ENCODE measurements at regions of chr1 and their contacts with region 1.

Region 1: GRCh38 chr1:24897767-24898483 is 32.2 kb downstream of the RUNX3 start:
- DNase-seq: peak; percentile 29 to 53 (median 40)
- H3K4me3 ChIP-seq: no peak overlapping the region
- H3K27ac ChIP-seq: no peak overlapping the region
- H3K4me1 ChIP-seq: peaks cover 0 to 24% (median 17%) of the 10 kb centered on the region in 4 experiments
- H3K27me3 ChIP-seq: no peaks in the 10 kb centered on the region

Region 2: DNA sequence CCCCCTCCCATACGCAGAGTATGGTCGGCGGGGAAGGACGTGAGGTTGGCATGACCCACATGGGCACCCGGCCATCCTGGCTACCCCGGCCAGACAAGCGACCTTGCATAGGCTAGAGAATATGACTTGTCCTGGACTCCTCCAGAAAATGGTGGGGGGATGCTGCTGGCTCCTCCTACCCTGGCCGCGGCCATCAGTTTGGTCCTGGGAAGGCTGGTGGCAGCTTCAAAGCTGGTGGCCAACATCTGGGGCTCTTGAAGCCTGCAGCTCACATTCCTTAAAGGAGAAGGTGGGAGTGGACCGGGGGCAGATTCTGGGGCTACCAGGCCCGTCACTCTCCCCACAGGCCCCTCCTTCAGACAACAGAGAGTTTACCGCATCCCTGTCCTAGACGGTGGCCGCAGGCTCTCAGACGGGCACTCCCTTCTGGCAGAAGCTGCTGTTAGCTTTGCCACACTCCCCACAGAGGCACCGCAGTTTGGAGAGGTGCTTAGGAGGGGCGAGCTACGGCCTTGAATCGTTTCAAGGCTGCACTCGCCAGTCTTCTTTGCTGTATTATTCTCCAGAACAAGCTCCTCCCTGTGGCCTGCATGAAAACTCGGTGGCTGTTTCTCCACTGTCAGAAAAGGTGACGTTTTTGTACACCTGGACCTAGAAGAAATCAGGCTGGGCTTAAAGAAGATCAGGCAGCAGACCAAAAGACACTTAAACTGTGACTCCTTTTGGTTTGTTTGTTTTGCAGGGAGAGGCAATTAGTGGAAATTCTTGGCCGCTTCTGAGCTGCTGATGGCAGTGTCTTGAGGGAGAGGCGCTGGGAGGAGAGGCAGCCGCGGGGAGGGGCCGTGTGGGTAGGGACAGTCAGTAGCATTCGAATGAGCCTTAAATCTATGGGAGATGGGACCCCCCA is 35.9 kb before region 1 on chr1:
- CTCF ChIA-PET with region 1: interaction called, 22 read pairs
- POLR2A ChIA-PET with region 1: no interaction called
- DNase-seq: no peak
- H3K4me3 ChIP-seq: no peak overlapping the region
- H3K27ac ChIP-seq: no peak overlapping the region
- H3K4me1 ChIP-seq: peaks cover 2 to 40% (median 21%) of the 10 kb centered on the region in 4 experiments
- H3K27me3 ChIP-seq: no peaks in the 10 kb centered on the region

Region 3: DNA sequence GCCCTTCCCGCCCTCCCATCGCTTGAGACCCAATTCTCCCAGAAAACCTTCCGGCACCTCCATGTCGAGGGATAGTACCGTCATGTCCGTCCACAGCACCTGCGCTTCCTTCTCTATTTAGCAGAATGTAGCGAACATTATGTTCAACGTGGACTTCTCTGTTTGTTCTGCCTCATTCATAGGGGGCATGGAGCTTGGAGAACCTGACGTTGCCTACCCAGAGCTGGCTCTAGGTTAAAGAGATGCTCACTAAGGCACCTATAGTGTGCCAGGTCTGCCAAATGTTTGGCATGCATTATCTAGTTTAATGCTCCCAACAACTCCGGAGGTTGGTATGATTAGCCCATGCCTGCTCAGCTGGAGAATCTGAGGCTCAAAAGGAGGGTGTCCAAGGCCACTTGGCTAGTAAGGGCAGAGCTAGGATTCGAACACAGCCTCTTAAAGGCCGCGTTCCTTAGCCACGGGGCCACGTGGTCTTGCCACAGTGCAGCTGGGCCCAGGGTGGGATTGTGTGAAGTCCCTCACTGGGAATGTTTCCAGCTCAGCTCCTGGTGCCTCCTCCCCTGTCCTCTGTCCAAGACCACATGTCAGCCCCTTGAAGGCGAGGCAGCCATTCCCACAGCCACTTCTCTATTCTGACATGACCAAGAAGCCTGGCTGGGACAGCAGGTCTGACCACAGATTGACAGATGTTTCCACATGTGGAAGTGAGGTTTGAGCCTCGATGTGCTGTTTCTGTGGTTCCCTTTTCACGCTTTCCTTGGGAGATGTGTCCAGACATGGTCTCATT is 25.7 kb before region 1 on chr1:
- CTCF ChIA-PET with region 1: interaction called, 21 read pairs
- POLR2A ChIA-PET with region 1: interaction called, 3 read pairs
- DNase-seq: peak; percentile 77 to 97 (median 96)
- H3K4me3 ChIP-seq: peak overlapping the region in 2 of 7 experiments; percentile 43 to 60
- H3K27ac ChIP-seq: peak overlapping the region in 1 of 2 experiments; percentile 62
- H3K4me1 ChIP-seq: peaks cover 2 to 79% (median 50%) of the 10 kb centered on the region in 4 experiments
- H3K27me3 ChIP-seq: no peaks in the 10 kb centered on the region